ENCODE measurements at regions of chr7 and their contacts with region 1.

Region 1: DNA sequence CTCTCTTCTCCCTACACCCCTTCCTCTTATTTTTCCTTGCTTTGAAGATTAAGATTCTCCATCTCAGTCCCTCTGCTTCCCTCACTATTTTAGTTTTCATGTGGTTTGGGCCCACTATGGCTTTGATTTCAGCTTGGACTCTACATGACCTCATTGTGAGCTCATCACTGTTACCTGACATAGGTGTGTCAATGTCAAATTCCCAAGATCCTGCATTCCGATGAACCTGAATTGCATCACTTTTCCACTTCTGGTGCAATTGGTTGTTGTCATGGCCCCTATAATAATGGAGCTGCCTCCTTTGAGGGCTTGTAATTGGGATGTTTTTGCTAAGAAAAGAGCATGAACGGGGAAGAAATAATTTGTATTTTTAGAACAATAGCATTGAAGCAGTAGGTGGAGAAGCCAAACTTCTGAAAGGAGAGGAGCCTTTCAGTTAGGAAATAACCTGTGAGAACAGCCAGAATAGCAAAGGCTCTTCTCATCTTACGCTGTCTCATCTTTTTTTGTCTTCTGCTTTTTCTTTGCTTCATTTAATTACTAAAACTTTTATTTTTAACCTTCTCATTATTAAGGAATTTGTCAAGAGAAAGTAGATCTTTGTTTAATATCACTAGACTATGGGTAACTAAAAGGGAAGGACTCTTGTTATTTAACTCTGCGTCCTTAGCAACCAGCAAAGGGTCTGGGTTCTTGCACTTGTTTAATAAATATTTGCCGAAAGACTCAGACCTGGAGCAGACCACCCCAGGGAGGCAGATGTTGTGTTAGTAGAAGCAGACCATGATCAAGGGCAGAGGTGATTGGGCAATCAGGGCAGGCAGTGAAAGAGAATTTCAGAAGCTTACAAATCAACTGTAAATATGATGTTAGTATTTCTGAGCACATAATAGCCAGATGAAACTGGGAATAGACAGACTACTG is 95.4 kb downstream of the TES start:
- DNase-seq: peak; percentile 42
- H3K4me3 ChIP-seq: no peak overlapping the region
- H3K27ac ChIP-seq: peak overlapping the region; percentile 57
- H3K4me1 ChIP-seq: peaks cover 5% of the 10 kb centered on the region
- H3K27me3 ChIP-seq: no peaks in the 10 kb centered on the region
- CTCF ChIP-seq: no peak

Region 2: DNA sequence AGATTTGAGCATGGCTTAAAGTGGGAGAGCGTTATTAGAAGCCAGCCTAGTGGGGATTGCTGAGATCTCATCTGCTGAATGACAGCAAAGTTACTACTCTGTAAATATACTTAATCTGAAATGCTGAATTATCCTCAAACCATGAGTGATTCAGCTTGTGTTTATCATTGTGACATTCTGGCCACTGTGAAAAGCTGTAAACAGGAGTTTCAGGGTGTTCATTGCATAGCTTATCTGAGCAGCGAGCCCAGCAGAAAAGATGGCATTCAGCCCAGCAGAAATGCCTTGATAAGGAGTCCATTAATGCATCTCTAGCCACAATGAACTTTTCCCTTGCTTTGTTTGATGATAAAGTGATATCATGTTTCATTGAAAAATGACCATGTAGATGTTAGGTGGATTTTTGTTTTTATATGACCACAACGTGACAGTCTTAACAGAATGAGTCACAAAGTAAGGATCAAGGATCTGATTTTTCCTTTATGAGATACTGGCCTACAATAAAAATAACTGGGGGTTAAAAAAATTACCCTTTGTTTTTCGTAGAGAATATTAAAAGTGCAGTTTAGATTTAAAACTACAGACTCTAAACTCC is 87.6 kb before region 1 on chr7:
- CTCF ChIA-PET with region 1: no interaction called
- dilution Hi-C with region 1: no loop called
- in situ Hi-C with region 1: no loop called
- intact Hi-C with region 1: no loop called
- DNase-seq: peak; percentile 73
- H3K4me3 ChIP-seq: no peak overlapping the region
- H3K27ac ChIP-seq: peak overlapping the region; percentile 93
- H3K4me1 ChIP-seq: peaks cover 52% of the 10 kb centered on the region
- H3K27me3 ChIP-seq: no peaks in the 10 kb centered on the region
- CTCF ChIP-seq: no peak

Region 3: DNA sequence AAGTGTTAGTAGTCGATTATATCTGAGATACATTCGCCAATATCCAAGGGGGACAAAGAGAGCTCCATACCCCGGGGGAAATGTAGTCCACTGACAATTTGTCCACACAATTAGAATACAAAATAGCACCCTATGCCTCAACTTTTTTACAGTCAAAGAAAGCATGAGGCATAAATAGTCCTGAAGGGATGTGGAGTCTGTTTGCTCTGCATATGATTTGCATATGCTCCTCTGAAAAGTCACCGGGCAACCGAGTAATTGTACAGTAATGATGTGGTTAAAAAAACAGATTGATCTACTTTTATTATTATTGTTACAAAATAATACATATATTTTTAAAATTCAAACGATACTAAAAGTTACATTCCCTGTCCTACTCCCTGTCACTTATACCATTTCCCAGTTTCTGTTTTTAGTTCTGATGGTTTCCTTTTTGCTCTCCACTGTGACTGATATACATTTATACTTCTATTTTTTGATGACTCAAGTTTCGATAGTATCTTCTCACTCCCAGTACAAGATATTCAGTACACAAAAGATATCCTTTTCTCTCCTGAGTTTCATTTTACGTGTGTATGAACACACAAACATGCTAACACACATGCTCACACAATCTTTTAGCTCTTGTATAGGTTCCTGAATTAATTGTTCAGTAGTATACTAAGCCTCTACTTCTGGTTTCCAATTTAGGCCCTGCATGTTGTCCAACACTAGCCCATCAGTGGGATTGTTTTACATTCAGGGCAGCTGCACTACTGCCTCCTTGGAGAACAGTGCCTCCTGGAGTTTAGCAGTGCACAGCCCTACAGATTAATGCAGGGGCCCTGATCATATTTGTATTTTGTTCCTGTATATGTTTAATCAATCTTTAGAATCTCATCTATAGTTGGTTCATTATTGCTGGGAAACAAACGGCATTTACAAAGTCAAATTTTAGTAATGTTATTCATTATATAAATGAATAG is 35.5 kb after region 1 on chr7:
- CTCF ChIA-PET with region 1: no interaction called
- dilution Hi-C with region 1: no loop called
- in situ Hi-C with region 1: no loop called
- intact Hi-C with region 1: loop called (anchors 5 kb)
- DNase-seq: no peak
- H3K4me3 ChIP-seq: no peak overlapping the region
- H3K27ac ChIP-seq: no peak overlapping the region
- H3K4me1 ChIP-seq: peaks cover 14% of the 10 kb centered on the region
- H3K27me3 ChIP-seq: no peaks in the 10 kb centered on the region
- CTCF ChIP-seq: peak; percentile 28 to 57

Region 4: GRCh38 chr7:116395125-116395791 is 89.5 kb after region 1 on chr7:
- CTCF ChIA-PET with region 1: no interaction called
- dilution Hi-C with region 1: no loop called
- in situ Hi-C with region 1: no loop called
- intact Hi-C with region 1: no loop called
- DNase-seq: peak; percentile 93
- H3K4me3 ChIP-seq: peak overlapping the region in 1 of 3 experiments; percentile 2
- H3K27ac ChIP-seq: peak overlapping the region; percentile 98
- H3K4me1 ChIP-seq: peaks cover 32% of the 10 kb centered on the region
- H3K27me3 ChIP-seq: no peaks in the 10 kb centered on the region
- CTCF ChIP-seq: no peak

Measured in mammary epithelial cell (primary cell).